ENCODE measurements at regions of chr2 and their contacts with region 1.

Region 1: GRCh38 chr2:85420536-85421259 is 2.2 kb downstream of the SH2D6 start:
- DNase-seq: peak; percentile 95
- H3K4me3 Mint-ChIP-seq: peak overlapping the region; percentile 53
- H3K27ac Mint-ChIP-seq: peak overlapping the region; percentile 64
- H3K4me1 Mint-ChIP-seq: peaks cover 18% of the 10 kb centered on the region
- H3K27me3 Mint-ChIP-seq: no peaks in the 10 kb centered on the region

Region 2: DNA sequence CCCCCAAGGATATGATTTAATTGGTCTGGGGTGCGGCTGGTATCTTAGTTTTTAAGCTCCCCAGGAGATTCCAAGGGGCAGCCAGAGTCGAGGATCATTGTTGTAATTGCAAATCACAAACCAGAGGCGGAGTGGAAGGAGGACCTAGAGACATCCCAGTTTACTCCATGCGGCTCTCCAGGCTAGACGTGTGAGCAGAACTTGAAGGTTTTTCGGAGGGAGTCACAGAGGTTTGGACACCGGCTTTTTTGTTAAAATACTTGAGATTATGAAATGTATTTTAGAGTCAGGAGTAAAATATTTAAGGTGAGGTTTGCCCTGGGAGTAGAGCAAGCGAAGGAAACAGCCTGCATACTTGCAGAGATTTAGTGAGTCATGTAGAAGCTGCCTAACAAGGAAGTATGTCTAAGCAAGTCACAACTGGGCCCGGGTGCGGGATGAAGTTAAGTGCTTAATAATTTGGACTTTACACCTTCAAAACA is 132.4 kb before region 1 on chr2:
- CTCF ChIA-PET with region 1: no interaction called
- POLR2A ChIA-PET with region 1: no interaction called
- intact Hi-C with region 1: no loop called
- DNase-seq: no peak
- H3K4me3 Mint-ChIP-seq: no peak overlapping the region
- H3K27ac Mint-ChIP-seq: no peak overlapping the region
- H3K4me1 Mint-ChIP-seq: peaks cover 16% of the 10 kb centered on the region
- H3K27me3 Mint-ChIP-seq: no peaks in the 10 kb centered on the region

Region 3: GRCh38 chr2:85354286-85355072 is 66.2 kb before region 1 on chr2 and contains the starts of genes ELMOD3 and RETSAT:
- CTCF ChIA-PET with region 1: interaction called, 5 read pairs
- POLR2A ChIA-PET with region 1: interaction called, 7 read pairs
- intact Hi-C with region 1: loop called (anchors 1 kb)
- DNase-seq: peak; percentile 98
- H3K4me3 Mint-ChIP-seq: peak within 1 kb of the TSS; percentile 100
- H3K27ac Mint-ChIP-seq: peak within 1 kb of the TSS; percentile 95
- H3K4me1 Mint-ChIP-seq: peaks cover 41% of the 10 kb centered on the region
- H3K27me3 Mint-ChIP-seq: no peaks in the 10 kb centered on the region
- total RNA-seq, gene ELMOD3: 11.1 to 15.0 TPM
- total RNA-seq, gene RETSAT: 22.6 to 22.8 TPM

Region 4: DNA sequence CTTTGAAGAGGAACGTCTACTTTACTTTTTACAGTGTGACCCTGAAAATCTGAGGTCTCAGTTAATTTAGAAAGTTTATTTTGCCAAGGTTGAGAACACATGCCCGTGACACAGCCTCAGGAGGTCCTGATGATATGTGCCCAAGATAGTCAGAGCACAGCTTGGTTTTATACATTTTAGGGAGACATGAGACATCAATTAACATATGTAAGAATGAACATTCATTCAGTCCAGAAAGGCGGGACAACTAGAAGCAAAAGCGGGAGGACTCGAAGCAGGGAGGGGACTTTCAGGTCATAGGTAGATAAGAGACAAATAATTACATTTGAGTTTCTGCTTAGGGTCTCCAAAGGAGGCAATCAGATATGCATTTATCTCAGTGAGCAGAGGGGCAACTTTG is 42.4 kb before region 1 on chr2:
- CTCF ChIA-PET with region 1: no interaction called
- POLR2A ChIA-PET with region 1: no interaction called
- intact Hi-C with region 1: no loop called
- DNase-seq: no peak
- H3K4me3 Mint-ChIP-seq: no peak overlapping the region
- H3K27ac Mint-ChIP-seq: no peak overlapping the region
- H3K4me1 Mint-ChIP-seq: no peaks in the 10 kb centered on the region
- H3K27me3 Mint-ChIP-seq: no peaks in the 10 kb centered on the region

Region 5: GRCh38 chr2:85390941-85391669 is 29.6 kb before region 1 on chr2:
- CTCF ChIA-PET with region 1: interaction called, 4 read pairs
- POLR2A ChIA-PET with region 1: interaction called, 3 read pairs
- intact Hi-C with region 1: loop called (anchors 2 kb)
- DNase-seq: peak; percentile 75
- H3K4me3 Mint-ChIP-seq: no peak overlapping the region
- H3K27ac Mint-ChIP-seq: no peak overlapping the region
- H3K4me1 Mint-ChIP-seq: peaks cover 4% of the 10 kb centered on the region
- H3K27me3 Mint-ChIP-seq: no peaks in the 10 kb centered on the region

Region 6: GRCh38 chr2:85437488-85438284 is 17.0 kb after region 1 on chr2:
- CTCF ChIA-PET with region 1: interaction called, 19 read pairs
- POLR2A ChIA-PET with region 1: interaction called, 22 read pairs
- intact Hi-C with region 1: loop called (anchors 2 kb)
- DNase-seq: peak; percentile 86
- H3K4me3 Mint-ChIP-seq: peak overlapping the region; percentile 81
- H3K27ac Mint-ChIP-seq: peak overlapping the region; percentile 98
- H3K4me1 Mint-ChIP-seq: peaks cover 27% of the 10 kb centered on the region
- H3K27me3 Mint-ChIP-seq: no peaks in the 10 kb centered on the region

Region 7: GRCh38 chr2:85551698-85552678 is 131.3 kb after region 1 on chr2:
- CTCF ChIA-PET with region 1: interaction called, 328 read pairs
- POLR2A ChIA-PET with region 1: interaction called, 33 read pairs
- intact Hi-C with region 1: loop called (anchors 1 kb)
- DNase-seq: peak; percentile 91
- H3K4me3 Mint-ChIP-seq: no peak overlapping the region
- H3K27ac Mint-ChIP-seq: no peak overlapping the region
- H3K4me1 Mint-ChIP-seq: peaks cover 3% of the 10 kb centered on the region
- H3K27me3 Mint-ChIP-seq: no peaks in the 10 kb centered on the region

Region 8: GRCh38 chr2:85611705-85612587 is 191.2 kb after region 1 on chr2 and contains the start of gene C2orf68:
- CTCF ChIA-PET with region 1: no interaction called
- POLR2A ChIA-PET with region 1: interaction called, 3 read pairs
- intact Hi-C with region 1: loop called (anchors 2 kb)
- DNase-seq: peak; percentile 94
- H3K4me3 Mint-ChIP-seq: peak within 1 kb of the TSS; percentile 95
- H3K27ac Mint-ChIP-seq: peak within 1 kb of the TSS; percentile 91
- H3K4me1 Mint-ChIP-seq: peaks cover 29% of the 10 kb centered on the region
- H3K27me3 Mint-ChIP-seq: no peaks in the 10 kb centered on the region
- total RNA-seq, gene C2orf68: 36.3 to 39.1 TPM

Measured in activated CD4-positive, alpha-beta memory T cell treated with anti-CD3 and anti-CD28 coated beads for 36 hours (primary cell).